ENCODE measurements at regions of chr3 and their contacts with region 1.

Region 1: GRCh38 chr3:51941798-51942602 is at the starts of genes PARP3 and RRP9:
- DNase-seq: peak; percentile 98 to 99
- H3K4me3 ChIP-seq: peak within 1 kb of the TSS; percentile 85
- H3K27ac ChIP-seq: peak within 1 kb of the TSS; percentile 68
- H3K4me1 ChIP-seq: peaks cover 16% of the 10 kb centered on the region; the same call in 1 of the 2 replicates
- H3K27me3 ChIP-seq: no peaks in the 10 kb centered on the region
- CTCF ChIP-seq: peak; percentile 94
- total RNA-seq, gene PARP3: 24.4 and 33.8 TPM in 2 replicates
- total RNA-seq, gene RRP9: 23.4 and 23.9 TPM in 2 replicates

Region 2: GRCh38 chr3:51336261-51336660 is 605.7 kb before region 1 on chr3:
- CTCF ChIA-PET with region 1: no interaction called
- POLR2A ChIA-PET with region 1: no interaction called
- intact Hi-C with region 1: no loop called
- DNase-seq: no peak
- H3K4me3 ChIP-seq: no peak overlapping the region
- H3K27ac ChIP-seq: no peak overlapping the region
- H3K4me1 ChIP-seq: peaks cover 29% of the 10 kb centered on the region
- H3K27me3 ChIP-seq: no peaks in the 10 kb centered on the region
- CTCF ChIP-seq: no peak

Region 3: DNA sequence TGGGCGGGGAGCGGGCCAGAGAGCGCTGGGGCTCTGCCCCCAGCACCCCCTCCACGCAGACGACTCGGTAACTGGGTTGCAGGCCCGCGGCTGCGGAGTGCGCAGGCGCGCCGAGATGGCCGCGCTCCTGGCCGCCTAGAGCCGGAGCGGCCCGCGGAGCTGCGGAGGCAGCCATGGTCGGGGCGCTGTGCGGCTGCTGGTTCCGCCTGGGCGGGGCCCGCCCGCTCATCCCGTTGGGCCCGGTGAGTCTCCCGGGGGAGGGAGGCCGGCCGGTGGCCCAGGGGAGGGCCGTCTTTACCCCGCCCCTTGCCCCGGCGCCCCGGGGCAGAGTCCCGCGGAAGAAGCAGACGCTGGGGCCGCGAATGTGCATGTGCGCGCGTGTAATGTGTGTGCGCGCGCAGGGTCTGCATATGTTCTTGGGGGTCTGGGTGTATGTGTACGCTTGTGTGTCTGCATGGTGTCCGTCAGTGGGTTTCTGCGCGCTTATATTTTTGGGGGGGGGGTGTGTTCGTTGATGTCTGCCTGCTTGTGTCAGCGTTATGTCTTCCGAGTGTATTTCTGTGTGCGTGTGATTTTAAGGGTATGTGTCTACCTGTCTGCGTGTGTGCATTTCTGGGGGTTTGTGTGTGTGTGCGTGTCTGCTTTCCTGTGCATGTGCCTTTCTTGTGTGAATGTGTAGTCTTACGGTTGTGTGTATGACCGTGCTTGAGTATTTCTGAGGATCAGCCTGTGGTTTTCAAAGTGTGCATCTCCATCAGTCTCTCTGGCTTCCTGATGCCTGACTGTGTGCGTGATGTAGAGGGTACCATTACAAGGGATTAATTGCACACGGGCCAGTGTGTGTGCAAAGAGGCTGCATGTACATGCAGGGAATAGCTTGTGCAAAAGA is 33.2 kb after region 1 on chr3 and contains the start of gene ABHD14A:
- CTCF ChIA-PET with region 1: interaction called, 5 read pairs
- POLR2A ChIA-PET with region 1: interaction called, 3 read pairs
- intact Hi-C with region 1: loop called (anchors 1 kb)
- DNase-seq: peak in 1 of 2 experiments; percentile 76
- H3K4me3 ChIP-seq: peak within 1 kb of the TSS; percentile 97
- H3K27ac ChIP-seq: 0 out of 2 replicates have a peak within 1 kb of the TSS, but pooled peaks have one; percentile 5
- H3K4me1 ChIP-seq: peaks cover 8% of the 10 kb centered on the region; the same call in 1 of the 2 replicates
- H3K27me3 ChIP-seq: no peaks in the 10 kb centered on the region
- CTCF ChIP-seq: no peak
- total RNA-seq, gene ABHD14A: 7.1 and 9.9 TPM in 2 replicates

Region 4: GRCh38 chr3:51995346-51996163 is 53.6 kb after region 1 on chr3 and contains the start of gene RPL29:
- CTCF ChIA-PET with region 1: no interaction called
- POLR2A ChIA-PET with region 1: interaction called, 3 read pairs
- intact Hi-C with region 1: loop called (anchors 1 kb)
- DNase-seq: peak; percentile 80 to 90
- H3K4me3 ChIP-seq: peak within 1 kb of the TSS; percentile 100
- H3K27ac ChIP-seq: peak within 1 kb of the TSS; percentile 95
- H3K4me1 ChIP-seq: peaks cover 20% of the 10 kb centered on the region
- H3K27me3 ChIP-seq: no peaks in the 10 kb centered on the region
- CTCF ChIP-seq: no peak; the same call in 1 of the 2 replicates
- total RNA-seq, gene RPL29: 942 and 1,278 TPM in 2 replicates

Region 5: DNA sequence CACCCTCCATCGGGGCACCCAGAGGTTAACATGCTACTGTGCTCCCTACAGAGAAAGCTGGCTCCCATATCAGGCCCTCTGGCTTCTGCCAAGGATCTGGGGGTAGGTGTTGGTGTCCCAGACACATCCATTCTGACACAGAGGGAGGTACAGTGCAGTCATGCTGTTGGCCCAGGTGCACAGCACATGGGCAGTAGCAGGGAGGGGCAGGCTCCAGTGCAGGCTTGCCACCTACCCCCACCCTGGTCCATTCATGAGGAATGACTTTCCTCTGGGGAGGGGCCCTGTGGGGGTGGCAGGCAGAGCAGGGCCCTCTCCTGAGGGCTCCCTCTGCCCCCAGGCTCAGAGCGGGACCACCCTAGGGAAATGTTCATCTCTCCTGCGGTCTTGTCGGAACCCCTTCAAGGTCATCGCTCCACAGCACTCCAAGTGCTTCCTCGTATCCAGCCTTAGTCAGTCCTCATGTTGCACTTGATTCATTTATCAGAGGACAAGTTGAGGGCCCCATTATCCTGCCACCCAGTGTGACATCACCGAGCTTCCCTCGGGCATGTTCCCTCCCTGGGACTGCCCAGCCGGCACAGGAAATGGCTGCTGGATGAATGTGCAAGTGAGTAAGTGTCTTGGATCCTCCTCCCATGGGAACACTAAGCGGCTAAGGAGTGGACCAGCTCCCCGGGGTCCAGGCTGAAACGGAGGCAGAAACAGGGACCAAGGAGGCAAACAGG is 104.3 kb after region 1 on chr3:
- CTCF ChIA-PET with region 1: no interaction called
- POLR2A ChIA-PET with region 1: no interaction called
- intact Hi-C with region 1: no loop called
- DNase-seq: peak; percentile 84 to 93
- H3K4me3 ChIP-seq: peak overlapping the region; percentile 38; the same call in 1 of the 2 replicates
- H3K27ac ChIP-seq: peak overlapping the region; percentile 83
- H3K4me1 ChIP-seq: peaks cover 25% of the 10 kb centered on the region
- H3K27me3 ChIP-seq: no peaks in the 10 kb centered on the region
- CTCF ChIP-seq: no peak

Region 6: GRCh38 chr3:52123106-52123725 is 181.2 kb after region 1 on chr3:
- CTCF ChIA-PET with region 1: no interaction called
- POLR2A ChIA-PET with region 1: no interaction called
- intact Hi-C with region 1: loop called (anchors 1 kb)
- DNase-seq: peak in 1 of 2 experiments; percentile 71
- H3K4me3 ChIP-seq: no peak overlapping the region
- H3K27ac ChIP-seq: no peak overlapping the region
- H3K4me1 ChIP-seq: peaks cover 7% of the 10 kb centered on the region
- H3K27me3 ChIP-seq: no peaks in the 10 kb centered on the region
- CTCF ChIP-seq: peak; percentile 81

Region 7: GRCh38 chr3:52238761-52239701 is 297.0 kb after region 1 on chr3 and contains the start of gene TWF2:
- CTCF ChIA-PET with region 1: no interaction called
- POLR2A ChIA-PET with region 1: no interaction called
- intact Hi-C with region 1: loop called (anchors 5 kb)
- DNase-seq: peak in 1 of 2 experiments; percentile 84
- H3K4me3 ChIP-seq: peak within 1 kb of the TSS; percentile 93
- H3K27ac ChIP-seq: peak within 1 kb of the TSS; percentile 89
- H3K4me1 ChIP-seq: peaks cover 57% of the 10 kb centered on the region
- H3K27me3 ChIP-seq: no peaks in the 10 kb centered on the region
- CTCF ChIP-seq: no peak
- total RNA-seq, gene TWF2: 102 and 115 TPM in 2 replicates